RWPE1 (cell line): ENCODE measurements at regions of chr9 and their contacts with region 1.

Region 1: GRCh38 chr9:90169490-90169889 is 473.1 kb downstream of the DIRAS2 start:
- DNase-seq: no peak
- H3K27ac ChIP-seq: no peak overlapping the region
- CTCF ChIP-seq: no peak

Region 2: DNA sequence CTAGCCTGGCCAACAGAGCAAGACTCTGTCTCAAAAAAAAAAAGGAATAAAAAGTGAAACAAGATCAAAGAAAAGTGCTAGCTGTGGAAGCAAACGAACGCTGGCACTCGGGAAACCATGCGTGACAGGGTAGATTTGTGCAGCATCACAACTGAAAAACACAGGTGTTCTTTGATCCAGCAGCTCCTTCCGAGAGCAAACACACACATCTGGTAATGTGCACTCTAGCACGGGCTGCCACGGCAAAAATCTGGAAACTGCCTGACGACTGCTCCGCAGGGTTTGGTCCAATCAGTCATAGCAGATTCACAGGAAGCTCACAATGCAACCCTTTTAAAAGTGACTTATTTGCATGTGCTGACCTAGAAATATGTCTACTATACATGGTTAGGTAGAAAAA is 712.2 kb after region 1 on chr9:
- CTCF ChIA-PET with region 1: interaction called, 10 read pairs
- POLR2A ChIA-PET with region 1: no interaction called
- DNase-seq: no peak
- H3K27ac ChIP-seq: no peak overlapping the region
- CTCF ChIP-seq: no peak